ENCODE measurements at regions of chr2 and their contacts with region 1.

Region 1: GRCh38 chr2:121128754-121129659 is 156.0 kb downstream of the TFCP2L1 start:
- DNase-seq: peak; percentile 48
- ATAC-seq: peak; percentile 91
- H3K4me3 ChIP-seq: no peak overlapping the region
- H3K27ac ChIP-seq: no peak overlapping the region
- H3K4me1 ChIP-seq: peaks cover 0 to 5% of the 10 kb centered on the region in 2 experiments; a peak in 3 of 4 replicates
- H3K27me3 ChIP-seq: no peaks in the 10 kb centered on the region; the same call in 1 of the 2 replicates
- CTCF ChIP-seq: peak; percentile 79 to 93 (median 90)
- POLR2A ChIP-seq: no peak
- RAD21 ChIP-seq: peak; percentile 86

Region 2: DNA sequence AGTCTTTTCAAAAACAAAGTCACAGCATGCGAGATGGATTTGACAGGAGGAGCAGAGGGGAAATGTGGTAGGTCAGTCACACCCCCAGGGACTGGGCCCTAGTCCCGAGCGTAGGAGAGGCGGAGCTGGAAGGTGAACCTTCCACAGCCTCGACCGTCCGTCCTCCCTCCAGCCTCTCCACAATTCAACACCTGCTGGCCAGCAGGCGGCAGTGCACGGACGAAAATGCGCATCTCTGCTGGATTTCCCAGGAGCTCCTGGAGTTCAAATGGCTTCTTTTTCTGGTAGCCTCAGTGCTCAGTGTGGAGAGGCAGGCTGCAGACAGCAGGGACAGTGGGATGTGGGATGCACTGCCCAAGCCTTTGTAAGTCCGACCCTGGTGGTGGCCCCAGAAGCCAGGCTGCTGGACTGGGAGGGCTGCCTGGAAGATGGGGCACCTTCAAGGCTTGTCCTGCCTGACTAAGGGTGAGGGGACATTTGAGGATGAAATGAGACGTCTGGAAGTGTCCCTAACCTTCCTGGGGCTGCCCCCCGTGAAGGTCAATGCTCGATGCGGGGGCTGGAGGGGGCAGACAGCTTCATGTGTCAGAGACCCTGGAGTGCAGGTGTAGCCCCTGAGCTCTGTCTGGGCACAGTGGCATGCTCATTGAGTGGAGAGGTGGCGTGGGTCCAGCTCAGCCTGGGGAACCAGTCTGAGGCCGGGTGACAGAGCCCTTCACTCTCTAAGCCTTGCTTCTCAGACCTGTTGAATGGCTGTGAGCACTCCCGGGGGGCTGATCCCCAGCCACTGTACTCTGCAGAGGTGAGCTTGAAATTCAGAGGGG is 33.5 kb before region 1 on chr2:
- CTCF ChIA-PET with region 1: interaction called, 24 read pairs
- POLR2A ChIA-PET with region 1: no interaction called
- RAD21 ChIA-PET with region 1: interaction called, 3 to 4 read pairs
- intact Hi-C with region 1: no loop called
- DNase-seq: peak; percentile 72
- ATAC-seq: peak; percentile 97
- H3K4me3 ChIP-seq: no peak overlapping the region
- H3K27ac ChIP-seq: no peak overlapping the region
- H3K4me1 ChIP-seq: peaks cover 0 to 9% of the 10 kb centered on the region in 2 experiments; a peak in 2 of 4 replicates
- H3K27me3 ChIP-seq: no peaks in the 10 kb centered on the region
- CTCF ChIP-seq: peak; percentile 82 to 87 (median 83)
- POLR2A ChIP-seq: no peak
- RAD21 ChIP-seq: peak; percentile 95

Region 3: GRCh38 chr2:121140734-121141133 is 11.7 kb after region 1 on chr2:
- CTCF ChIA-PET with region 1: interaction called, 16 read pairs
- POLR2A ChIA-PET with region 1: no interaction called
- RAD21 ChIA-PET with region 1: no interaction called
- intact Hi-C with region 1: no loop called
- DNase-seq: no peak
- ATAC-seq: peak; percentile 63
- H3K4me3 ChIP-seq: no peak overlapping the region
- H3K27ac ChIP-seq: no peak overlapping the region
- H3K4me1 ChIP-seq: peaks cover 0 to 7% of the 10 kb centered on the region in 2 experiments; a peak in 1 of 4 replicates
- H3K27me3 ChIP-seq: no peaks in the 10 kb centered on the region
- CTCF ChIP-seq: no peak
- POLR2A ChIP-seq: no peak
- RAD21 ChIP-seq: no peak

Region 4: GRCh38 chr2:121319953-121320352 is 190.9 kb after region 1 on chr2:
- CTCF ChIA-PET with region 1: interaction called, 13 read pairs
- POLR2A ChIA-PET with region 1: no interaction called
- RAD21 ChIA-PET with region 1: no interaction called
- intact Hi-C with region 1: loop called (anchors 1 kb)
- DNase-seq: no peak
- ATAC-seq: no peak
- H3K4me3 ChIP-seq: no peak overlapping the region
- H3K27ac ChIP-seq: no peak overlapping the region
- H3K4me1 ChIP-seq: no peaks in the 10 kb centered on the region
- H3K27me3 ChIP-seq: no peaks in the 10 kb centered on the region
- CTCF ChIP-seq: no peak
- POLR2A ChIP-seq: no peak
- RAD21 ChIP-seq: no peak

Region 5: GRCh38 chr2:121356058-121356640 is 227.1 kb after region 1 on chr2:
- CTCF ChIA-PET with region 1: interaction called, 99 read pairs
- POLR2A ChIA-PET with region 1: interaction called, 9 read pairs
- RAD21 ChIA-PET with region 1: interaction called, 10 to 12 read pairs
- intact Hi-C with region 1: loop called (anchors 1 kb)
- DNase-seq: peak; percentile 48
- ATAC-seq: peak; percentile 95
- H3K4me3 ChIP-seq: no peak overlapping the region
- H3K27ac ChIP-seq: no peak overlapping the region
- H3K4me1 ChIP-seq: peaks cover 0 to 9% of the 10 kb centered on the region in 2 experiments; a peak in 1 of 4 replicates
- H3K27me3 ChIP-seq: no peaks in the 10 kb centered on the region
- CTCF ChIP-seq: peak; percentile 76 to 82 (median 78)
- POLR2A ChIP-seq: no peak
- RAD21 ChIP-seq: peak; percentile 80